ENCODE measurements at regions of chr19 and their contacts with region 1.

Region 1: GRCh38 chr19:3284759-3285646 is 60.5 kb downstream of the CELF5 start:
- DNase-seq: peak; percentile 94
- ATAC-seq: peak; percentile 91
- H3K4me3 Mint-ChIP-seq: peak overlapping the region; percentile 51
- H3K27ac Mint-ChIP-seq: no peak overlapping the region
- H3K4me1 Mint-ChIP-seq: peaks cover 12% of the 10 kb centered on the region
- H3K27me3 Mint-ChIP-seq: peaks cover 19% of the 10 kb centered on the region

Region 2: GRCh38 chr19:2900296-2901252 is 384.4 kb before region 1 on chr19 and contains the start of gene ZNF57:
- CTCF ChIA-PET with region 1: no interaction called
- POLR2A ChIA-PET with region 1: no interaction called
- intact Hi-C with region 1: loop called in 1 of 2 experiments (anchors 2 kb)
- DNase-seq: peak; percentile 100
- ATAC-seq: peak; percentile 99
- H3K4me3 Mint-ChIP-seq: peak within 1 kb of the TSS; percentile 98
- H3K27ac Mint-ChIP-seq: peak within 1 kb of the TSS; percentile 96
- H3K4me1 Mint-ChIP-seq: peaks cover 18% of the 10 kb centered on the region
- H3K27me3 Mint-ChIP-seq: no peaks in the 10 kb centered on the region
- total RNA-seq, gene ZNF57: 5.9 to 7.1 TPM

Region 3: DNA sequence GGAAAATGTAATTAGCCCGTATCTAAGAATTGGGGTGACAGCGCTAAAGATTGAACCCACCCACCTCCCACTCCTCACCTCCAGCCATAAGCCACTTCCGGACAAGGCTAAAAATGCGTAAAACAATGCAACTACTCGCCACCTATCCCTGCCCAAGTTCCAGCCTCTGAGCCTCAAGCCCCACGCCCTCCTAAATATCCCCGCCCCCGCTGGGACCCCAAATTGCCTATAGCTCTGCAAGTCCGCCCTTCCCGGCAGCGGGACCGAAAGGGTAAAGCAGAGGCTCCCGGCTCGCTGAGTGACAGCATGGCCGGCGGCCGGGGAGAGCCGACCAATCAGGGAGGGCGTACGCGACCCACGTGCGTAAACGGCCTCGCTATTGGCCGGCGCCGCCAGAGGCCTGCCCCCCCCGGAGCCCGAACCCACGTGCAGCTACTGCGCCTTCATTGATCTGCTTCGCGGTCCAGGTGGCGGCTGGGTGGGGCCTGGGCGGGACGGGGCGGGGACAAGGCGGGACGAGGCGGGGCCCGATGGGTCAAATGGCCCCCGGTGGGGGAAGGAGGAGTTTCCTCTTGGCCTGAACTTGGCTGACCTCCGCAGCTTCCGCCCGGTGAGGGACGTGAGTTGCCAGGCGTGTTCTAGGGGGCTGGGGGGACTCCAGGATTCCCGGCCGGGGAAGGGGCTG is 307.9 kb before region 1 on chr19 and contains the start of gene TLE6:
- CTCF ChIA-PET with region 1: interaction called, 3 read pairs
- POLR2A ChIA-PET with region 1: no interaction called
- intact Hi-C with region 1: loop called in 1 of 2 experiments (anchors 1 kb)
- DNase-seq: peak; percentile 98
- ATAC-seq: peak; percentile 100
- H3K4me3 Mint-ChIP-seq: peak within 1 kb of the TSS; percentile 77
- H3K27ac Mint-ChIP-seq: peak within 1 kb of the TSS; percentile 63
- H3K4me1 Mint-ChIP-seq: peaks cover 14% of the 10 kb centered on the region
- H3K27me3 Mint-ChIP-seq: peaks cover 4% of the 10 kb centered on the region
- total RNA-seq, gene TLE6: 2.6 to 3.5 TPM

Region 4: DNA sequence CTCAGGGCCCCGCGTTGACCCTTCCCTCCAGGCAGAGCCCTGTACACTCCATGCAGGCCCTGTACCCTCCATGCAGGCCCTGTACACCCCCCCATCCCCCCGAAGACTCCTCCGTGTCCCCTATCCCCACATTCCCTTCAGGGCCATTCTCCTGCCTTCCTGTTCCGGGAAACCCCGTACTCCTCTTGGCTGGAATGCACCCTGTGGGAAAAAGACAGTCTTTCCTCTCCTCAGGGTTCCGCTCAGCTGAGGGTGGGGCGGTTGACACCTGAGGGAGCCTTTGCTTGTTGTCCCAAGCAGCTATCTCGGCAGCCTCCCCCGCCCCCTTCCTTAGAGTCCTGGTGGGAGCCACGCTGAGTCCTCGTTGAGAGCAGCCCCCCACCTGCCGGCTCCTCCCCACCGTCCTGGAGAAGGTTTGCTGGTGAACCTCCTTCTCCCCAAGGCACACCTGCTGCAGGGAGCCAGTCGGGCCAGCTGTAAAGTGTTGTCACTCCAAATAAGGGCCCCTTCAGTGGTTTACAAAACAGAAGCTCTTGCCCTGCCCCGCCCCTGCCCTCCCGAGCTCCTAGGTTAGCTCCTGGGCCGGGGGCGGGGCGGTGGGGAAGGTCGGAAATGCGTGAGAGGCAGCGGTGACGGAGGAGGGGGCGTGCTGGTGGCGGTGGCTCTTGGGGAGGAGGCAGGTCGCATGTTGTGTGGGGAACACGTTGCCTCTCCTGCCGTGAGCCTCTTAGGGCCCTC is 189.4 kb before region 1 on chr19:
- CTCF ChIA-PET with region 1: no interaction called
- POLR2A ChIA-PET with region 1: no interaction called
- intact Hi-C with region 1: no loop called
- DNase-seq: peak; percentile 74
- ATAC-seq: peak; percentile 9
- H3K4me3 Mint-ChIP-seq: peak overlapping the region; percentile 74
- H3K27ac Mint-ChIP-seq: no peak overlapping the region
- H3K4me1 Mint-ChIP-seq: peaks cover 28% of the 10 kb centered on the region
- H3K27me3 Mint-ChIP-seq: no peaks in the 10 kb centered on the region

Region 5: DNA sequence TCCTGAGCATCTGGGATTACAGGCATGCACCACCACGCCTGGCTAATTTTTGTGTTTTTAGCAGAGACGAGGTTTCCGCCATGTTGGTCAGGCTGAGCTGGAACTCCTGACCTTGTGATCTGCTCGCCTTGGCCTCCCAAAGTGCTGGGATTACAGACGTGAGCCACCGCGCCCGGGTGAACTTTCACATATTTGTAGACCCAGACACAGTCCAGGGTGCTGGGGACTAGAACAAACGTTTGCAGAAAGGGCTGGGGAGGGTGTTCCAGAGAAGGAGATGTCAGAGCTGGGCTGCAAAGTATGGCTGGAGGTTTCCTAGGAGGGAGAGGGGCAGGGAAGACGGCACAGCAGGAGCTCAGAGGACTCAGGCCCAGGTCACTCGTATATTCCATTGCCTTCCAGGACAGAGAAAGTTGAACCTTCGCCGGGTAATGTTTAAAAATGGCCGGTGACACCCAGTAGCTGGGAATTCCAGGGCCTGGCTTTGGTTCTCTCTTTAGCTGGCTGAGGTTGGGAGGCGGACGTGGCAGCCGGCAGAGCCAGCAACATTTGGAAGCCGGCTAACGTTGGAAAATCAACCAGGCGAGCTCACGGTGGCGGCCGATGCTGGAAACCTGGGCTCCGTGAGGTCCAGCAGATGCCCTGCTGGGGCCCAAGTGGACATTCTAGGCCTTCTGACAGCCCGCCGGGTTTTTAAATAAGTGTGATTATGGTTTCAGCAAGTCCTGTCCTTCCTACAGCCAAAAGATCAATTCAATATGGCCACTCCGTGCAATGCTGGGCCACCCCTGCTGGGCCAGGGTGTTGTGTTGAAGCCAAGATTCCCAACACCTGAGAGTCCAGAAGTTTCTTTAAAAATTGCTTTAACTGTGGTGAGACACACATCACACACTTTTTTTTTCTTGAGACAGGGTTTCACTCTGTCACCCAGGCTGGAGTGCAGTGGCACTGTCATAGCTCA is 122.8 kb after region 1 on chr19:
- CTCF ChIA-PET with region 1: no interaction called
- POLR2A ChIA-PET with region 1: no interaction called
- intact Hi-C with region 1: no loop called
- DNase-seq: no peak
- ATAC-seq: no peak
- H3K4me3 Mint-ChIP-seq: no peak overlapping the region
- H3K27ac Mint-ChIP-seq: peak overlapping the region; percentile 31
- H3K4me1 Mint-ChIP-seq: no peaks in the 10 kb centered on the region
- H3K27me3 Mint-ChIP-seq: no peaks in the 10 kb centered on the region

Region 6: GRCh38 chr19:3434712-3435553 is 149.9 kb after region 1 on chr19:
- CTCF ChIA-PET with region 1: interaction called, 3 read pairs
- POLR2A ChIA-PET with region 1: no interaction called
- intact Hi-C with region 1: loop called in 1 of 2 experiments (anchors 1 kb)
- DNase-seq: peak; percentile 98
- ATAC-seq: peak; percentile 96
- H3K4me3 Mint-ChIP-seq: peak overlapping the region; percentile 84
- H3K27ac Mint-ChIP-seq: peak overlapping the region; percentile 99
- H3K4me1 Mint-ChIP-seq: peaks cover 13% of the 10 kb centered on the region
- H3K27me3 Mint-ChIP-seq: no peaks in the 10 kb centered on the region

Region 7: GRCh38 chr19:3450796-3451411 is 165.9 kb after region 1 on chr19:
- CTCF ChIA-PET with region 1: no interaction called
- POLR2A ChIA-PET with region 1: no interaction called
- intact Hi-C with region 1: no loop called
- DNase-seq: no peak
- ATAC-seq: no peak
- H3K4me3 Mint-ChIP-seq: no peak overlapping the region
- H3K27ac Mint-ChIP-seq: no peak overlapping the region
- H3K4me1 Mint-ChIP-seq: no peaks in the 10 kb centered on the region
- H3K27me3 Mint-ChIP-seq: no peaks in the 10 kb centered on the region

Region 8: GRCh38 chr19:3479177-3479833 is 194.3 kb after region 1 on chr19:
- CTCF ChIA-PET with region 1: no interaction called
- POLR2A ChIA-PET with region 1: no interaction called
- intact Hi-C with region 1: loop called in 1 of 2 experiments (anchors 1 kb)
- DNase-seq: peak; percentile 68
- ATAC-seq: peak; percentile 77
- H3K4me3 Mint-ChIP-seq: no peak overlapping the region
- H3K27ac Mint-ChIP-seq: no peak overlapping the region
- H3K4me1 Mint-ChIP-seq: peaks cover 9% of the 10 kb centered on the region
- H3K27me3 Mint-ChIP-seq: no peaks in the 10 kb centered on the region